Activated CD4-positive, alpha-beta T cell treated with anti-CD3 and anti-CD28 coated beads for 36 hours (primary cell): ENCODE measurements at regions of chr1 and their contacts with region 1.

Region 1: GRCh38 chr1:27568300-27569087 is 35.5 kb downstream of the AHDC1 start:
- DNase-seq: peak; percentile 95
- ATAC-seq: peak; percentile 97
- H3K4me3 Mint-ChIP-seq: peak overlapping the region; percentile 39
- H3K27ac Mint-ChIP-seq: no peak overlapping the region
- H3K4me1 Mint-ChIP-seq: peaks cover 18% of the 10 kb centered on the region
- H3K27me3 Mint-ChIP-seq: no peaks in the 10 kb centered on the region

Region 2: DNA sequence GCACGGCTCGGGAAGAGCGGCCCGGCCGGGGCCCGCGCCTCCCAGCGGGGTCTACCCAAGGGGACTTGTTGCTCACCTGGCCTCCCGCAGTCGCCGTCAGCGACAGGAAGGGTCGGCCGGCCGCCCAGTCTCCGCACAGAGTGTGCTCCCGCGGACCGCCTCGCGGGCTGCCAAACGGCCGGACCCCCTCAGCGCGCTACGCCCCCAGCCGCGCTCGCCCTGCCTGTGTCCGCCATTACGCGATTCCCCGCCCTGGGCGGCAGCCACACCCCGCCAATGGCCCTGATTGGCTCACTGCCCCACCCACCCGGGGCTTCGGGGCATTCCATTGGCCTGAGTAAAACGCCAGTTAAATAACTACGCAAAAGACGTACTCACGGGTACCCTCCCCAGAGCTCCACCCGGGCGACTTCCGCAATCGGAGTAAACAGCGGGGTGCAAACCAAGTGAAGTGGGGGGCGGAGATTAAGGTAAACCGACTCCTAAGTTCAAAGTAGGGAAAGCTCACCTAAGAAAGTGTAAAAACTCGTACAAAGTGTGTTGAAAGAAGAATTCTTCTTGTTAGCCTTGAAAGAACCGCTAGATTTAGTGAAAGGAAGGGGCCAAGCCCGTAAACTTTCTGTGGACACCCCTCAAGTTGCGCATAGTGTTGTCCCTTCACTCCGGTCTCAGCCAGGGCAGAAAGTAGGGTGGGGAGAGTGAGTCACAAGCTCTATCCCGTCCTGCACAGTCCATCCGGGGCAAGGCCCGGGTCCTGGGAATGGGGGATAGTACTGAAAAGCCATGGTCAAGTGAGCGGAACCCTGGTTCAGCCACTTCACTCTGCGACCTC is 78.4 kb before region 1 on chr1 and contains the start of gene WASF2:
- CTCF ChIA-PET with region 1: no interaction called
- POLR2A ChIA-PET with region 1: no interaction called
- intact Hi-C with region 1: loop called in 1 of 2 experiments (anchors 2 kb)
- DNase-seq: peak; percentile 98
- ATAC-seq: peak; percentile 96
- H3K4me3 Mint-ChIP-seq: peak within 1 kb of the TSS; percentile 98
- H3K27ac Mint-ChIP-seq: peak within 1 kb of the TSS; percentile 99
- H3K4me1 Mint-ChIP-seq: peaks cover 28% of the 10 kb centered on the region
- H3K27me3 Mint-ChIP-seq: no peaks in the 10 kb centered on the region
- total RNA-seq, gene WASF2: 104 to 132 TPM

Region 3: GRCh38 chr1:27536024-27536757 is 32.3 kb before region 1 on chr1:
- CTCF ChIA-PET with region 1: no interaction called
- POLR2A ChIA-PET with region 1: no interaction called
- intact Hi-C with region 1: no loop called
- DNase-seq: no peak
- ATAC-seq: no peak
- H3K4me3 Mint-ChIP-seq: no peak overlapping the region
- H3K27ac Mint-ChIP-seq: no peak overlapping the region
- H3K4me1 Mint-ChIP-seq: peaks cover 17% of the 10 kb centered on the region
- H3K27me3 Mint-ChIP-seq: no peaks in the 10 kb centered on the region

Region 4: DNA sequence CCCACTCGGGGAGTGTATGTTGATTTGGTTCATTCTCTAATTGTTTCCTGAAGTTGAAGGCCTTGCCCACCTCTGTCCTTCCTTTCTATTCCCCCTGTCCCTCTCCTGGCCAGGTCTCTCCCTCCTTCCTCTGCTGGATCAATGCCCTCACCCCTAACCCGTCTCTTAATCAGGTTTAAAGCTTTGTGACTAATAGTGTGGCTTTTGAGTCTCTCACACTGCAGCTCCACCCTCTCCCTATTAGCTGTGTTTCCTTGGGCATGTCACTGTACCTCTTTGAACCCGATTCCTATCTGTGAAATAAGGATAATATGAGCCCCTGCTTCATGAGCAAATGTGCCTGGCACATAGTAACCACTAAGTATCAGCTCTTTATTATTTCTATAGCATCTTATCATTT is 15.0 kb after region 1 on chr1:
- CTCF ChIA-PET with region 1: interaction called, 15 read pairs
- POLR2A ChIA-PET with region 1: interaction called, 5 read pairs
- intact Hi-C with region 1: no loop called
- DNase-seq: no peak
- ATAC-seq: no peak
- H3K4me3 Mint-ChIP-seq: no peak overlapping the region
- H3K27ac Mint-ChIP-seq: no peak overlapping the region
- H3K4me1 Mint-ChIP-seq: peaks cover 9% of the 10 kb centered on the region
- H3K27me3 Mint-ChIP-seq: no peaks in the 10 kb centered on the region